ENCODE measurements at regions of chr3 and their contacts with region 1.

Region 1: DNA sequence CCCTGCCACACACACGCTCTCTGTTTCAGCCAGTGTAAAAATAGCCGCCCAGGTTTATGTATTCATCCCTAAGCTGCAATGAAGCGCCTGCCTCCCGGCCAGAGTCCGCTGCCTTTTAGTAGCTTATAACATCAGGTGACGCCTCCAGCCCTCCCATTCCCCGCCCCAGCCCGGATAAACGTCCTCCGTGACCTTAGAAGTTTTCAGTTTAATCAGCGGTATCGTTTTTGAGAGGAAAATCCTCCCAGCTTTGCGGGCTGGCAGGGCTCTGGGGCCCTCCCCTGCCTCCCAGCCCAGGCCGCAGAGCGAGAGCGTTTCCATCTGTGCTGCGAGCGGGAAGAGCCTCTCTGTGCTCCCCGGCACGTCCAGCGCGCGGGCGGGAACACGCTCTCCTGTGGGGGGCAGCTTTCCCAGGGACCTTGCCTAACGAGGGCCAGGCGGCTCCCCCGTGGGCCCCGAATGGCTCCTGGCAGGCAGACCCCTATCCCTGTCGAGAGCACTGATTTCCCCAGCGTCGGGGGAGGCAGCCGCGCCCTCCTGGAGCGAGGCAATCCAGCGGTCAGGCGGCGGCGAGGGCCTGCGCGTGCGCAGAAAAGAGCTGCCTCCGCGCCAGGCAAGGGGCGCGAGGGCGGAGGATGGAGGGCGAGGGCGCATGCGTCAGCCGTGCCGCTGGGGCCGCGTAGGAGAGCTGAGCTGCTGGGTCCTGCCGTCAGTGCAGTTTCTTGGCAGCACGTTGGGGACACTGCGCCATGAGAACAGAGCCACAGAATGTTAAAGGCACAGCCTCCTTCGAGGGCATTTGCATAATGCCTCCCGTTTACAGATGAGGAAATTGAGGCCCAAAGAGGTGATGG is 71.1 kb downstream of the CCNL1 start:
- DNase-seq: peak; percentile 95
- H3K4me3 Mint-ChIP-seq: peak overlapping the region; percentile 76
- H3K27ac Mint-ChIP-seq: peak overlapping the region; percentile 95
- H3K4me1 Mint-ChIP-seq: peaks cover 71% of the 10 kb centered on the region
- H3K27me3 Mint-ChIP-seq: no peaks in the 10 kb centered on the region

Region 2: GRCh38 chr3:156483961-156484787 is 604.7 kb before region 1 on chr3:
- CTCF ChIA-PET with region 1: interaction called, 3 read pairs
- POLR2A ChIA-PET with region 1: interaction called, 24 read pairs
- DNase-seq: peak; percentile 62
- H3K4me3 Mint-ChIP-seq: peak overlapping the region; percentile 72
- H3K27ac Mint-ChIP-seq: peak overlapping the region; percentile 88
- H3K4me1 Mint-ChIP-seq: peaks cover 42% of the 10 kb centered on the region
- H3K27me3 Mint-ChIP-seq: no peaks in the 10 kb centered on the region

Region 3: GRCh38 chr3:156674046-156674910 is 414.6 kb before region 1 on chr3 and contains the start of gene TIPARP:
- CTCF ChIA-PET with region 1: interaction called, 14 read pairs
- POLR2A ChIA-PET with region 1: interaction called, 71 read pairs
- DNase-seq: peak; percentile 99
- H3K4me3 Mint-ChIP-seq: peak within 1 kb of the TSS; percentile 86
- H3K27ac Mint-ChIP-seq: peak within 1 kb of the TSS; percentile 96
- H3K4me1 Mint-ChIP-seq: peaks cover 47% of the 10 kb centered on the region
- H3K27me3 Mint-ChIP-seq: no peaks in the 10 kb centered on the region
- total RNA-seq, gene TIPARP: 64.7 to 73.8 TPM

Region 4: DNA sequence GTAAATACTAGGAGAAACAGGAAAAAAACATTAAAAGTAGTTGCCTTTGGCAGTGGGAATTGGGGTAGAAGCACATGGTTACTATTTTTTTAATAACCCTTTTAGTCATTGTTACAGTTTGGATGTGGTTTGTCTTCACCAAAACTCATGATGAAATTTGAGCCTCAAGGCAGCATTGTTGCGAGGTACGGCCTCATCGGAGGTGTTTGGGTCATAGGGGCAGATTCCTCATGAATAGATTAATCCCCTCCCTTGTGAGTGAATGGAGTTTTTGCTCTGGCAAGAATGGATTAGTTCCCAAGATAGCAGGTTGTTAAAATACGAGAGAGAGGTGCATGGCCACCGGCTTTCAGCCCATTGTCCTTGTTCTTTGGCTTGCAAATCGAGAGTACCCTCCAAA is 170.1 kb before region 1 on chr3:
- CTCF ChIA-PET with region 1: no interaction called
- POLR2A ChIA-PET with region 1: no interaction called
- DNase-seq: no peak
- H3K4me3 Mint-ChIP-seq: no peak overlapping the region
- H3K27ac Mint-ChIP-seq: no peak overlapping the region
- H3K4me1 Mint-ChIP-seq: no peaks in the 10 kb centered on the region
- H3K27me3 Mint-ChIP-seq: no peaks in the 10 kb centered on the region

Region 5: GRCh38 chr3:157067114-157067513 is 21.7 kb before region 1 on chr3:
- CTCF ChIA-PET with region 1: interaction called, 11 read pairs
- POLR2A ChIA-PET with region 1: interaction called, 19 read pairs
- DNase-seq: peak; percentile 62
- H3K4me3 Mint-ChIP-seq: no peak overlapping the region
- H3K27ac Mint-ChIP-seq: peak overlapping the region; percentile 47
- H3K4me1 Mint-ChIP-seq: peaks cover 30% of the 10 kb centered on the region
- H3K27me3 Mint-ChIP-seq: peaks cover 3% of the 10 kb centered on the region

Region 6: DNA sequence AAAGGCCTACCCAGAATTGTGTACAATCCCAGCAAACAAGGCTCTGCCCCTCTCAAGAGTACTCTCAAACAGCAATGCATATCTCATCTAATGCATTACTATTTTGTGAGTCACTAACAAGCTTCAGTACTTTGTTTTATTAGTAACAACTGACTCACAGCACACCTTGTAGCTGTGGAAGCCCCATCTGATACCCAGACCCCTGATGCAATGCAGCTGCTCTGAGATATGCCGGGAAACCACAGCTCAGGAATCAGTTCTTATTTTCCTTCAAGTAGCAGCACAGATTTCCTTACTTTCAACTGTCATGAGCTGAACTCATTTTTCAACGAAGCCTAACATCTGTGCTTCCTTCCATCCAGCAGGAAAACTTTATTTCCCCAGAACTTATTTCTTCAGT is 33.3 kb after region 1 on chr3:
- CTCF ChIA-PET with region 1: interaction called, 84 read pairs
- POLR2A ChIA-PET with region 1: interaction called, 381 read pairs
- DNase-seq: no peak
- H3K4me3 Mint-ChIP-seq: no peak overlapping the region
- H3K27ac Mint-ChIP-seq: no peak overlapping the region
- H3K4me1 Mint-ChIP-seq: peaks cover 34% of the 10 kb centered on the region
- H3K27me3 Mint-ChIP-seq: no peaks in the 10 kb centered on the region

Region 7: GRCh38 chr3:157159762-157160657 is 71.2 kb after region 1 on chr3 and contains the start of gene CCNL1:
- CTCF ChIA-PET with region 1: interaction called, 3 read pairs
- POLR2A ChIA-PET with region 1: interaction called, 46 read pairs
- DNase-seq: peak; percentile 96
- H3K4me3 Mint-ChIP-seq: peak within 1 kb of the TSS; percentile 100
- H3K27ac Mint-ChIP-seq: peak within 1 kb of the TSS; percentile 100
- H3K4me1 Mint-ChIP-seq: peaks cover 57% of the 10 kb centered on the region
- H3K27me3 Mint-ChIP-seq: no peaks in the 10 kb centered on the region
- total RNA-seq, gene CCNL1: 223 to 249 TPM